Lower leg skin (tissue), 4 donors: ENCODE measurements at regions of chr7 and their contacts with region 1.

Region 1: DNA sequence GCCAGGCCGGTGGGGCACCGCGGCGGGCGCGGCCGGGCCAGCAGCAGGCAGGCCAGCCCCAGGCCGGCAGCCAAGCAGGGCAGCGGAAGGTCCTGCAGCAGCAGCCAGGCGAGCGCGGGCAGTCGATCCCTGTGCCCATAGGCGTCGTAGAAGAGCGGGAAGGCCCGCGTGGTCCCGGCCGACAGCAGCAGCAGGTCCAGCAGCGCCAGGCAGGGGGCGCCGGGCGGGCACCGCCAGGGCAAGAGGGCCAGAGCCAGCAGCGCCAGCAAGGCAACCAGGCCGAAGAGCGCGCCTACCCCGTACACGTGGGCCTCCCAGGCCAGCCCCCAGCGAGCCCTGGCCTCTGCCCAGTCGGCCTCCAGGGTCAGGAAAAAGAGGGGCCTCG is 8.4 kb upstream of the RBM28 start:
- DNase-seq: no peak
- H3K4me3 ChIP-seq: no peak overlapping the region
- CTCF ChIP-seq: no peak
- POLR2A ChIP-seq: no peak

Region 2: GRCh38 chr7:128197589-128197988 is 154.6 kb before region 1 on chr7:
- intact Hi-C with region 1: no loop called
- DNase-seq: peak in 1 of 2 donors; percentile 42
- H3K4me3 ChIP-seq: no peak overlapping the region
- CTCF ChIP-seq: no peak
- POLR2A ChIP-seq: no peak

Region 3: GRCh38 chr7:128387216-128388144 is 35.3 kb after region 1 on chr7:
- intact Hi-C with region 1: loop called (anchors 5 kb)
- DNase-seq: peak; percentile 58 to 96
- H3K4me3 ChIP-seq: no peak overlapping the region
- CTCF ChIP-seq: peak in 1 of 3 donors; percentile 60
- POLR2A ChIP-seq: no peak

Region 4: DNA sequence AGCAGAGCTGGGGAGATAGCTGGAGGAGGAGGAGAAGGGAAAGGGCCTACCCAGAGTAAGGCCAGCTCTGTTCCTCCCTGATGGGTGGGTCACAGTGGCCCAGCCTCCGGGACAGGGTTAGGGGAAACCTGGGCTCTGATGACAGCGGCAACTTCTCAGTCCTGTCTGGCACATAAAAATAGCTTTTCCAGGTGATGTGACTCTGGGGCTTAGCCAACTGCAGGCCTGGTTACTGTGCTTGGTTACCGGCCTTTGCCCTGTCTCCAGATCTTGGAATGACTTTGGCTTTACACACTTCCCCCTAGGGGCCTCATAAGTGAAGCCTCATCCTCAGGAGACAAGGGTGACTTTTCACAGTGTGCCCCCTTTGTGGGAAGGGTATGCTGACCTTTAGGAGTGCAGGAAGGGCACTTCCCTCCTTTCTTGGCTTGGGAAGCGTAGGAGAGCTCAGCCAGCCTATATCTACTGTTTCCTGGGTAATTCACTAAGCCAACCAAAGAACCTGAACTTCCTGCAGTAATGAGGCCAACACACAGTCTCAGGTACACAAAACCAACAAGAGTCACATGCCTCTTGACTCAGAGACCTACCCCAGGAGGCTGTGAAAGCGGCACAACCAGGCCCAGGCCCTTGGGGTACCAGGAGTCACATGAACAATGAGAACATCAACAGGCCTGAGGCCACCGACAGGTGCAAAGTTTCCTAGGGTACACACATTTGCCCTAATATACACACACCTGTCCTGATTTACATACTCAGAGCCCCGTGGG is 91.9 kb after region 1 on chr7:
- intact Hi-C with region 1: no loop called
- DNase-seq: no peak
- H3K4me3 ChIP-seq: no peak overlapping the region
- CTCF ChIP-seq: no peak
- POLR2A ChIP-seq: no peak